ENCODE measurements at regions of chr4 and their contacts with region 1.

Region 1: DNA sequence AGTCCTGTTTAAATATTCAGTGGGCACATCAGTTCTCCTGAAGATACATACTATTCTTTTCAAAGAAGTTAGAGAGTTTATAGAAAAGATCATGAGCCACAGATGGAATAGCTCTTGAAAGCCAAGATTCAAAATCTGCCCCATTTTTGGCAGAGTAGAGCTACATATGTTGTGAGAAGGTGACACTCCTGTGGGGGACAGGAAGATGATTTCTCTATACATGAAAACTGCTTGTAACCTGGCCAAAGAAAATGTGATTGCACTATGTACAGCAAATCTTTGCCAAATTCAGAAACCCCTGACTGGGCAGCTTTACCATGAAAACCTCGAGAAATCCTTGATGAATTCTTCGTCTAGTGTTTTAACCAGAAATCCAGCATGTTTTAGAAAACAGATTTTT is 44.9 kb downstream of the GPM6A start:
- DNase-seq: no peak
- H3K4me3 ChIP-seq: no peak overlapping the region
- H3K27me3 ChIP-seq: no peaks in the 10 kb centered on the region
- CTCF ChIP-seq: no peak

Region 2: DNA sequence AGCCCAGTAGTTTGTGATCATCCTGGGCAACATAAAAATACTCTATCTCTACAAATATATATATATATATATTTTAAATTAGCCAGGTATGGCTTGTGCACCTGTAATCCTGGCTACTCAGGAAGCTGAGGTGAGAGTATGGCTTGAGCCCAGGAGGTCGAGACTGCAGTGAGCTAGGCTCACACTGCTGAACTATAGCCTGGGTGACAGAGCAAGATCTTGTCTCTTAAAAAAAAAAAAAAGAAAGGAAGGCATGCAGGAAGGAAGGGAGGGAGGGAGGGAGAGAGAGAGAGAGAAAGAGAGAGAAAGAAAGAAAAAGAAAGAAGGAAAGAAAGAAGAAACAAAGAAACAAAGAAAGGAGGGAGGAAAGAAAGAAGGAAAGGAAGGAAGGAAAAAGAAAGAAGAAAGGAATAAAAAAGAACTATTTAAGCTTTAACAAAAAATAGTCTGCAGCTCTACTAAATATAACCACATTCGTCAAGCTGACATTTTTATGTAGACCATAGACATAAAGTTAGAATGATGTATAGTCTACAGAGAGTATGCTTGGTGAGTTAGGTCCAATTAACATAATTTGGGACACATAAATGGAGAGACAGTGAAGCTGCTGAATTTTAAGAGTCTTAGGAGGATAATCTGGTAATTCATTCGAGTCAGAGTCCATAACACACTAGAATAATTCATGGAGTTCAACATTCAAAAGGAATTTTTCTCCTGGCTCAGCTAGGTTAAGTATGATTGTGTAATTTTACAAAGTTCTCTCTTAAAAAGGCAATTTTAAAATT is 1050.0 kb before region 1 on chr4:
- CTCF ChIA-PET with region 1: no interaction called
- POLR2A ChIA-PET with region 1: interaction called, 10 read pairs
- DNase-seq: no peak
- H3K4me3 ChIP-seq: no peak overlapping the region
- H3K27me3 ChIP-seq: no peaks in the 10 kb centered on the region
- CTCF ChIP-seq: no peak

Measured in BJ (cell line).